ENCODE measurements at regions of chrX and their contacts with region 1.

Region 1: DNA sequence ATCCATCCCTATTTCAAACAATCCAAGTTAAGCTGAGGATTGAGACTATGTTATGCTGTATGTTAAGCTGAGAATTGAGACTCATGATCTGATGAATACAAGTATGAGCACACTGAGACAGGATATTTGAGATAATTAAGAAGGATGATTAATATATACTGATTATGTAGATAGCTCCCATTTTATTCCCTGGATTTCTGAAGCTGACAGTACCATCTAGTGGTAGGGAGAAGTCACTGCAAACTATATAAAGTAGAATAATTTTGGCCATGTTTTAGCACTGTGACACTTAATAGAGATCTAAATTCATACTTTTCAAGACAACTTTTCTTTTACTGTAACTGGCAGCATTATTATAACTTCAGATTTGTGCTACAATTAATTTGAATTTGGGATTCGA is 63.8 kb upstream of the HPRT1 start:
- DNase-seq: no peak
- ATAC-seq: no peak
- H3K4me3 ChIP-seq: no peak overlapping the region
- H3K27ac ChIP-seq: no peak overlapping the region
- H3K4me1 ChIP-seq: no peaks in the 10 kb centered on the region
- H3K27me3 ChIP-seq: no peaks in the 10 kb centered on the region
- CTCF ChIP-seq: peak; percentile 77; the same call in 1 of the 2 replicates

Region 2: GRCh38 chrX:134246282-134246681 is 149.9 kb before region 1 on chrX:
- CTCF ChIA-PET with region 1: interaction called, 17 read pairs
- POLR2A ChIA-PET with region 1: no interaction called
- in situ Hi-C with region 1: no loop called
- intact Hi-C with region 1: no loop called
- DNase-seq: no peak
- ATAC-seq: no peak
- H3K4me3 ChIP-seq: no peak overlapping the region
- H3K27ac ChIP-seq: no peak overlapping the region
- H3K4me1 ChIP-seq: no peaks in the 10 kb centered on the region
- H3K27me3 ChIP-seq: peaks cover 7% of the 10 kb centered on the region; the same call in 1 of the 2 replicates
- CTCF ChIP-seq: peak; percentile 24

Region 3: DNA sequence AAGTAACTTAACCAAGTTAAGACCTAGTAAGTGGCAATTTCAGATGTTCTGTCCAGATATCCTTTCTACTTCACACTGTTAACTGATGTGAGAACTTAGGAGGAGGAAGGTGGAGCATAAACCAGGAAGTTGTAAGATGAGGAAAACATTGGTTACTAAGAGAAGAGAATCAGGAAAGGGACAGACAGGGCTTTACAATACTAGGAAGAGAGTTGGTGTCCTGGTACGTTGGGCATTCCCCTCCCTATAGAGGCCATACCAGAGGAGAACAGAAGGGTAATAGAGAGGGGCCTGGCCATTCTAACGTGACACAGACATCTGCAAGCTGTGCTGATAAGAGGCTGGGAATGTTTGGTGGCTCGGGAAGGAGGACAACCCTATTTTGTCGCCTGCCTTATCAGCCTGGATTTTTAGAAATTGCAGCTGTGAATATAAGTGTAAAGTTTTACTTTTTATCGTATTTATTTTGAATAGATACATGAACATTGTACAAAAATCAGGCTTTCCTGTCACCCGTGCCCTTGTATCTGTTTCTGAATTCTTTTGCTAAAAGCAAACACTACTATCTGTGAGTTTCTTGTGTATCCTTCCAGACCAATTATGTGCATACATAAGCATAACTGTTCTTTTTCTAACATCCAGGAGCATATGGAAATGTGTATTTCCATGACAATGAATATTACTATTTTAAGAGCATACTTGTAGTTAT is 10.3 kb after region 1 on chrX:
- CTCF ChIA-PET with region 1: no interaction called
- POLR2A ChIA-PET with region 1: interaction called, 24 read pairs
- in situ Hi-C with region 1: no loop called
- intact Hi-C with region 1: no loop called
- DNase-seq: no peak
- ATAC-seq: no peak
- H3K4me3 ChIP-seq: no peak overlapping the region
- H3K27ac ChIP-seq: no peak overlapping the region
- H3K4me1 ChIP-seq: no peaks in the 10 kb centered on the region
- H3K27me3 ChIP-seq: no peaks in the 10 kb centered on the region
- CTCF ChIP-seq: no peak

Region 4: DNA sequence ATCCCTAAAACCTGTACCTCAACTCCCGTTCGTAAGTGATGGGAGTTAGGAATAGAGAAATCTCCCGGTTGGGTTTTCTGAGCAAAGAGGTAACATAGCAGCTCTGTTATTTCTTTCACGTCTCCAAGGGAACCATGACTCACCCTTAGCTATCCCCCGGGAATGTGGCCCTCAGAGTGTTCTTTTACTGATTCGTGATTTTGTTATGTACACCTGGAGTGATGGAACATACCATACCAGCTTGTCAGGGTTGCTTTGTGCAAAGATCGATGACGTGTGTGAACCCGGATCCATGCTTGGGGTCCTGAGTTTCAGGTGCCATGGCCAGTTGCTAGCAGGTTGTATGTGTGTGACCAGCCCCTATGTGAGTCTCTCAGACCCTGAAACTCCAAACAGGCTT is 116.4 kb after region 1 on chrX:
- CTCF ChIA-PET with region 1: no interaction called
- POLR2A ChIA-PET with region 1: no interaction called
- in situ Hi-C with region 1: no loop called
- intact Hi-C with region 1: no loop called
- DNase-seq: no peak
- ATAC-seq: 0 out of 2 replicates have a peak, but pooled peaks have one; percentile 48
- H3K4me3 ChIP-seq: no peak overlapping the region
- H3K27ac ChIP-seq: no peak overlapping the region
- H3K4me1 ChIP-seq: no peaks in the 10 kb centered on the region
- H3K27me3 ChIP-seq: no peaks in the 10 kb centered on the region
- CTCF ChIP-seq: no peak

Measured in Panc1 (cell line).